Heart right ventricle (tissue), 16 donors: ENCODE measurements at regions of chr20 and their contacts with region 1.

Region 1: GRCh38 chr20:42441864-42442331 is 747.8 kb downstream of the PTPRT start:
- DNase-seq: no peak
- ATAC-seq: peak in 3 of 8 donors; percentile 6 to 50 (median 47)
- H3K4me3 ChIP-seq: no peak overlapping the region
- H3K27ac ChIP-seq: no peak overlapping the region
- H3K4me1 ChIP-seq: peaks cover 0 to 16% (median 0%) of the 10 kb centered on the region in 9 donors
- H3K27me3 ChIP-seq: peaks cover 0 to 3% (median 0%) of the 10 kb centered on the region in 7 donors
- CTCF ChIP-seq: no peak

Region 2: DNA sequence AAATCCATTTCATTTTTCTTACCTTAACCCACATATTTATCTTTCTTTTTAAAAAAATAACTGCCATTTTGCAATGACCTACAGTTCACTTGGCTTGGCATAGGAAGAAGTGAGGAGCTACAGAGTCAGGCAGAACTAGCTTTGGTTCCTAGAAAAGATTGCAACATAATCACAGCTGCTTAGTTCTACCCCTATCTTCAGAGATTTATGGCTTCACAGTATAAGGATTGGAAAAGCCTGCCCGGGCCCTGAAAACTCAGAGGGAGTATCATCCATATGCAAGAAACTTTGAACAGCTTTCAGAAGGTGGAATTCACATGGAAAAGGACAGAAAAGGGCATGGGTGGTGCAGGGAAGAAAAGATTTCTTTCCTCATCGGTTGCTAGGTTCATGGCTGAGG is 49.5 kb before region 1 on chr20:
- intact Hi-C with region 1: loop called in 1 of 10 experiments (anchors 10 kb)
- DNase-seq: no peak
- ATAC-seq: peak in 7 of 8 donors; percentile 53 to 89 (median 71)
- H3K4me3 ChIP-seq: no peak overlapping the region
- H3K27ac ChIP-seq: peak overlapping the region in 1 of 10 donors; percentile 22
- H3K4me1 ChIP-seq: no peaks in the 10 kb centered on the region
- H3K27me3 ChIP-seq: peaks cover 0 to 5% (median 0%) of the 10 kb centered on the region in 7 donors
- CTCF ChIP-seq: no peak